MCF 10A (cell line): ENCODE measurements at regions of chr17 and their contacts with region 1.

Region 1: GRCh38 chr17:17356149-17356930 is 53.2 kb downstream of the NT5M start:
- DNase-seq: peak; percentile 82
- H3K4me3 Mint-ChIP-seq: no peak overlapping the region
- H3K27ac Mint-ChIP-seq: no peak overlapping the region
- H3K4me1 Mint-ChIP-seq: no peaks in the 10 kb centered on the region
- H3K27me3 Mint-ChIP-seq: peaks cover 41% of the 10 kb centered on the region
- CTCF ChIP-seq: peak; percentile 100

Region 2: GRCh38 chr17:17001874-17002520 is 354.3 kb before region 1 on chr17:
- CTCF ChIA-PET with region 1: no interaction called
- POLR2A ChIA-PET with region 1: interaction called, 3 read pairs
- intact Hi-C with region 1: loop called (anchors 5 kb)
- DNase-seq: peak; percentile 80
- H3K4me3 Mint-ChIP-seq: no peak overlapping the region
- H3K27ac Mint-ChIP-seq: no peak overlapping the region
- H3K4me1 Mint-ChIP-seq: no peaks in the 10 kb centered on the region
- H3K27me3 Mint-ChIP-seq: no peaks in the 10 kb centered on the region
- CTCF ChIP-seq: peak; percentile 97

Region 3: DNA sequence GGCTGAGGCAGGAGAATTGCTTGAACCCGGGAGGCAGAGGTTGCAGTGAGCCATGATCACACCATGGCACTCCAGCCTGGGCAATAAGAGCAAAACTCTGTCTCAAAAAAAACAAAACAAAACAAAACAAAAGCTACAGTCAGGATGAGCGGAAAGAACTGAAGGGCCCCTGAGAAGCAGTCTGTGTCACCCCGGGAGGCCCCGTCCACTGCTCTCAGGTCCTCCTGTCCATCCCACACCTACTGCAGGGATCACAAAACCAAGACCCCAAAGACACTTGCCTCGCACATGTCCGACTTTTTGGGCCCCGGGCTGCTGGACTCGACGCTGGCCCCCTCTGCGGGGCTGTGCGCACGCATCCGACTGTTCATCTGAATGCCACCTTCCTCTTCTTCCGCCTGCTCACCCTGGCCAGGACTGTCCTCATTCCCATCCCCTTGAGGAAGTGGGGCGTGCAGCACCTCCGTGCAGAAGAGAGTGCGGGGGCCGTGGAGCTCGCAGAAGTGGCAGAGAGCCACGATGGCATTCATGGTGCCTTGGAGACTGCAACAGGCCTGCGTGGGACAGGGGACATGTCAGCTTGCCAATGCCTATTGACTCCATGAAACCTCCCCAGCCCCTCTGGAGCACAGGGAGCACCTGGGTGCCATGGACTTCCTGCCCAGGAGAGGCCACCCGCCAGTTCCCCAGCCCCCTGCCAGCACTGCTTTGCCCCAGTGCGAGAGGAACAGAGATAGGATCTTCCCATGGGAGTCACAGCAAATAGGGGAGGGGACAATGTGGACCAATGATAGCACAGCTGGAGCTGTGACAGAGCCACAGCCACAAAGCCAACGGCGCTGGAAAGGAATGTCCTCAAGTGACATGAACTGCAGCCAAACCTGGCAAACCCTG is 128.5 kb before region 1 on chr17:
- CTCF ChIA-PET with region 1: no interaction called
- POLR2A ChIA-PET with region 1: no interaction called
- intact Hi-C with region 1: no loop called
- DNase-seq: no peak
- H3K4me3 Mint-ChIP-seq: no peak overlapping the region
- H3K27ac Mint-ChIP-seq: no peak overlapping the region
- H3K4me1 Mint-ChIP-seq: no peaks in the 10 kb centered on the region
- H3K27me3 Mint-ChIP-seq: no peaks in the 10 kb centered on the region
- CTCF ChIP-seq: no peak

Region 4: GRCh38 chr17:17370711-17371110 is 14.4 kb after region 1 on chr17:
- CTCF ChIA-PET with region 1: interaction called, 10 read pairs
- POLR2A ChIA-PET with region 1: no interaction called
- intact Hi-C with region 1: no loop called
- DNase-seq: no peak
- H3K4me3 Mint-ChIP-seq: no peak overlapping the region
- H3K27ac Mint-ChIP-seq: no peak overlapping the region
- H3K4me1 Mint-ChIP-seq: no peaks in the 10 kb centered on the region
- H3K27me3 Mint-ChIP-seq: peaks cover 70% of the 10 kb centered on the region
- CTCF ChIP-seq: no peak

Region 5: GRCh38 chr17:17496189-17497064 is 140.1 kb after region 1 on chr17 and contains the start of gene RASD1:
- CTCF ChIA-PET with region 1: interaction called, 21 read pairs
- POLR2A ChIA-PET with region 1: interaction called, 4 read pairs
- intact Hi-C with region 1: loop called (anchors 1 kb)
- DNase-seq: peak; percentile 69
- H3K4me3 Mint-ChIP-seq: peak within 1 kb of the TSS; percentile 57
- H3K27ac Mint-ChIP-seq: no peak within 1 kb of the TSS
- H3K4me1 Mint-ChIP-seq: no peaks in the 10 kb centered on the region
- H3K27me3 Mint-ChIP-seq: no peaks in the 10 kb centered on the region
- CTCF ChIP-seq: peak; percentile 88
- total RNA-seq, gene RASD1: 0.21 TPM in 1 of 2 replicates, not detected in the other

Region 6: DNA sequence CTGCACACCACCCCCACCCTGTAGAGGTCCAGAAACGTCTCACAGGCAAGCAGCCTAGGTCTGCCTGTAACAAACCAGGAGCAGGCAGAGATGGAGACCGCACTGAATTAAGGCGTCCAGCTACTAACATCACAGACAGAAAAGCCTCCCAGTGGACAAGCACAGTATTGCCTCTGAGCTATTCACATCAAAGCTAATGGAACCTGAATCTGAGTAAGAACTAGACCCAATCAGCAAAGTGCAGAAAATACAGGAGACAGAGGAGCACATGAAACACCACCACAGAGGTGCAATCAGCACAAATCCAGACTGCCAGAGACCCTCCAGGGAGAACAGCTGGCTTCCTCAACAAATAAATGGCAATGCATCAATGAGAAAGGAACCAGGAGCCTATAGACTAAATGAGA is 257.4 kb after region 1 on chr17:
- CTCF ChIA-PET with region 1: interaction called, 12 read pairs
- POLR2A ChIA-PET with region 1: no interaction called
- intact Hi-C with region 1: loop called (anchors 1 kb)
- DNase-seq: peak; percentile 69
- H3K4me3 Mint-ChIP-seq: no peak overlapping the region
- H3K27ac Mint-ChIP-seq: no peak overlapping the region
- H3K4me1 Mint-ChIP-seq: no peaks in the 10 kb centered on the region
- H3K27me3 Mint-ChIP-seq: no peaks in the 10 kb centered on the region
- CTCF ChIP-seq: peak; percentile 44

Region 7: GRCh38 chr17:17641621-17642409 is 285.5 kb after region 1 on chr17:
- CTCF ChIA-PET with region 1: interaction called, 82 read pairs
- POLR2A ChIA-PET with region 1: no interaction called
- intact Hi-C with region 1: loop called (anchors 1 kb)
- DNase-seq: peak; percentile 86
- H3K4me3 Mint-ChIP-seq: no peak overlapping the region
- H3K27ac Mint-ChIP-seq: no peak overlapping the region
- H3K4me1 Mint-ChIP-seq: no peaks in the 10 kb centered on the region
- H3K27me3 Mint-ChIP-seq: peaks cover 9% of the 10 kb centered on the region
- CTCF ChIP-seq: peak; percentile 76